Posterior vena cava (tissue), 2 donors: ENCODE measurements at regions of chr6 and their contacts with region 1.

Region 1: DNA sequence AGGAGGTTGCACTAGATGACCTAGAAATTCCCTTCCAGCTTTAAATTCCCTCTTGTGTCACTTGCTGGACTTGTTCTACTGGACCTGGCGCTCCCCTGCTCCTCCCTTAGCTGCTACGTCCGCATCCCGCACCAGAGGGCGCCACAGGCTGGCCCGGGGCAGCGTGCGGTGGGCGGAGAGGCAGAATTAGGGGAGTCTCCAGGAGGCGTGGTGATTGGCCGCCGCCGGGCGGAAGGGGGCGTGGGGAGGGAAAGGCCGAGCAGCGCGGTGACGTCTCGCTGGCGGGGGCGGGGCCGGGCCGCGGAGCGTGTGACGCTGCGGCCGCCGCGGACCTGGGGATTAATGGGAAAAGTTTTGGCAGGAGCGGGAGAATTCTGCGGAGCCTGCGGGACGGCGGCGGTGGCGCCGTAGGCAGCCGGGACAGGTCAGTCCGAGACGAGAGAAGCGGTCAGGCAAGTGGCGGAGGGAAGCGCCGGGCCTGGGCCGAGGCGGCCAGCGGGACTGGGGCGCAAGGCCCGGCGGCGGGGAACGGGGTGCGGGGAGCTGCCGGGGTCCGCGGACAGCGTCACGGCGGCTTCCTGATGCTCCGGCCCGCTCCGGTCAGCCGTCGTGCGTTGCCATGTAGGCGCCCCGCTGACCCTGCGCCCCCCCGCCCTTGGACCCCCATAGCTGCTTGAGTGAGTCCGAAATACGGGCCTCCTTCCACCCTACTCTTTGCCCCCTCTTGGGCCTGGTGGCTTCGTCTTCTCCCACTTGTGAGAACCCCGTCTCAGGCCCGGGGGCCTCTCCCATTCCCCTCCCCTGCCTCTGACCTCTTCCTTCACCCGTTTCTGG is at the start of gene PPARD:
- DNase-seq: peak; percentile 100
- total RNA-seq, gene PPARD: 16.3 to 19.8 TPM

Region 2: DNA sequence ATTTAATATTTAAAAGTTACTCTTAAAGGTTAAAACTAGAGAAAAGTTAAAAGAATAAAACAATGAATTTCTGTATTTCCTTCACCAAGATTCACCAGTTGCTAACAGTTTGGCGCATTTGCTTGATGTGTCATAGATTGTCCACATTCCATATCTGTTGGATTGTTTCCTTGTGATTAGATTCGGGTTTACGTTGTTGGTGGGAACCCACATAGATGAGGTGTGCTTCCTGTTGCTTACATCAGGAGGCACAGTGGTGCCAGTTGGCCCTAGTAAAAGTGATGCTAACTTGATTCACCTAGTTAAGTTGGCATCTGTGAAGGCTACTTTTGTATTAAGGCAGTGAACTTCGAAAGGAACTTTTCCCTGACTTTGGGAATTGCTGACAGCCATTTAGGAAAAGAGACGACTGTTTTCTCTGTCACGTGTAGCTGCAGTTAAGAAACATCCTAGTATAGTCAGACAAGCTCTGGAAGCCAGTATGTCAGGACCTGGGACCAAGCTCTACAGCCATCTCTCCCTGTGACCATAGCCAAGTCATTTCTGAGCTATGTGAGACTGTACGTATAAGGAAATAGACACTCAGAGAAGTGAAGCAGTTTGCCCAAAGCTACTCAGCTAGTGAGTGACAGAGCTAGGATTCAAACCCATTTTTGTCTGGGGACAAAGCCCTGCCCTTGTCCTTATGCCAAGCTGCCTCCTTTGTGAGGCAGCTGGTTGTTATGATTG is 48.9 kb after region 1 on chr6:
- intact Hi-C with region 1: loop called in 1 of 2 experiments (anchors 1 kb)
- DNase-seq: no peak

Region 3: GRCh38 chr6:35415065-35415991 is 72.9 kb after region 1 on chr6:
- intact Hi-C with region 1: loop called in 1 of 2 experiments (anchors 5 kb)
- DNase-seq: peak; percentile 86